ENCODE measurements at regions of chr19 and their contacts with region 1.

Region 1: GRCh38 chr19:5904352-5905113 is at the start of gene VMAC:
- DNase-seq: peak; percentile 100
- ATAC-seq: peak; percentile 85
- H3K4me3 ChIP-seq: peak within 1 kb of the TSS; percentile 78 to 100 (median 99)
- H3K27ac ChIP-seq: peak within 1 kb of the TSS; percentile 98
- H3K4me1 ChIP-seq: peaks cover 66% of the 10 kb centered on the region
- H3K27me3 ChIP-seq: peaks cover 0 to 4% of the 10 kb centered on the region in 2 experiments; a peak in 1 of 5 replicates
- CTCF ChIP-seq: no peak; the same call in 1 of the 2 replicates
- EP300 ChIP-seq: no peak
- POLR2A ChIP-seq: peak; percentile 62 to 80; a peak in 3 of 4 replicates
- RAD21 ChIP-seq: peak; percentile 71
- total RNA-seq, gene VMAC: 1.2 and 2.4 TPM in 2 replicates

Region 2: GRCh38 chr19:5803752-5804515 is 100.6 kb before region 1 on chr19:
- CTCF ChIA-PET with region 1: interaction called, 3 read pairs
- POLR2A ChIA-PET with region 1: interaction called, 27 read pairs
- in situ Hi-C with region 1: no loop called
- intact Hi-C with region 1: no loop called
- DNase-seq: peak; percentile 83
- ATAC-seq: peak; percentile 88
- H3K4me3 ChIP-seq: peak overlapping the region; percentile 36 to 68 (median 42)
- H3K27ac ChIP-seq: no peak overlapping the region
- H3K4me1 ChIP-seq: peaks cover 67% of the 10 kb centered on the region
- H3K27me3 ChIP-seq: no peaks in the 10 kb centered on the region; a peak in 1 of 5 replicates
- CTCF ChIP-seq: peak; percentile 99
- EP300 ChIP-seq: peak; percentile 7 to 25; a peak in 1 of 4 replicates
- POLR2A ChIP-seq: peak in 1 of 2 experiments; percentile 42; a peak in 1 of 4 replicates
- RAD21 ChIP-seq: peak; percentile 100

Region 3: GRCh38 chr19:5839065-5840017 is 65.2 kb before region 1 on chr19 and contains the start of gene FUT6:
- CTCF ChIA-PET with region 1: no interaction called
- POLR2A ChIA-PET with region 1: interaction called, 23 read pairs
- in situ Hi-C with region 1: no loop called
- intact Hi-C with region 1: no loop called
- DNase-seq: peak; percentile 59
- ATAC-seq: peak; percentile 70
- H3K4me3 ChIP-seq: peak within 1 kb of the TSS; percentile 69 to 84 (median 75)
- H3K27ac ChIP-seq: peak within 1 kb of the TSS; percentile 80
- H3K4me1 ChIP-seq: peaks cover 58% of the 10 kb centered on the region
- H3K27me3 ChIP-seq: no peaks in the 10 kb centered on the region; a peak in 1 of 5 replicates
- CTCF ChIP-seq: 0 out of 2 replicates have a peak, but pooled peaks have one; percentile 6
- EP300 ChIP-seq: 0 out of 4 replicates have a peak, but pooled peaks of 1 of the 2 experiments have one; percentile 55
- POLR2A ChIP-seq: peak in 1 of 2 experiments; percentile 63; a peak in 2 of 4 replicates
- RAD21 ChIP-seq: no peak
- total RNA-seq, gene FUT6: 5.0 and 8.2 TPM in 2 replicates

Region 4: GRCh38 chr19:5921516-5922160 is 17.1 kb after region 1 on chr19:
- CTCF ChIA-PET with region 1: no interaction called
- POLR2A ChIA-PET with region 1: no interaction called
- in situ Hi-C with region 1: no loop called
- intact Hi-C with region 1: no loop called
- DNase-seq: no peak
- ATAC-seq: no peak
- H3K4me3 ChIP-seq: no peak overlapping the region
- H3K27ac ChIP-seq: no peak overlapping the region
- H3K4me1 ChIP-seq: no peaks in the 10 kb centered on the region
- H3K27me3 ChIP-seq: no peaks in the 10 kb centered on the region; a peak in 1 of 5 replicates
- CTCF ChIP-seq: no peak
- EP300 ChIP-seq: no peak
- POLR2A ChIP-seq: no peak
- RAD21 ChIP-seq: no peak

Region 5: GRCh38 chr19:5953680-5954213 is 49.2 kb after region 1 on chr19:
- CTCF ChIA-PET with region 1: no interaction called
- POLR2A ChIA-PET with region 1: interaction called, 13 read pairs
- in situ Hi-C with region 1: no loop called
- intact Hi-C with region 1: loop called (anchors 2 kb)
- DNase-seq: no peak
- ATAC-seq: no peak
- H3K4me3 ChIP-seq: peak overlapping the region in 1 of 3 experiments; percentile 38; a peak in 1 of 6 replicates
- H3K27ac ChIP-seq: peak overlapping the region; percentile 58
- H3K4me1 ChIP-seq: peaks cover 66% of the 10 kb centered on the region
- H3K27me3 ChIP-seq: no peaks in the 10 kb centered on the region
- CTCF ChIP-seq: no peak
- EP300 ChIP-seq: no peak
- POLR2A ChIP-seq: no peak
- RAD21 ChIP-seq: no peak

Region 6: GRCh38 chr19:5961969-5962945 is 57.7 kb after region 1 on chr19:
- CTCF ChIA-PET with region 1: no interaction called
- POLR2A ChIA-PET with region 1: interaction called, 22 read pairs
- in situ Hi-C with region 1: no loop called
- intact Hi-C with region 1: loop called (anchors 2 kb)
- DNase-seq: peak; percentile 98
- ATAC-seq: peak; percentile 93
- H3K4me3 ChIP-seq: peak overlapping the region; percentile 19 to 68 (median 41); a peak in 5 of 6 replicates
- H3K27ac ChIP-seq: peak overlapping the region; percentile 95
- H3K4me1 ChIP-seq: peaks cover 99% of the 10 kb centered on the region
- H3K27me3 ChIP-seq: no peaks in the 10 kb centered on the region
- CTCF ChIP-seq: peak; percentile 53
- EP300 ChIP-seq: peak; percentile 20 to 82; a peak in 3 of 4 replicates
- POLR2A ChIP-seq: peak; percentile 45 to 85; a peak in 3 of 4 replicates
- RAD21 ChIP-seq: peak; percentile 36; the same call in 1 of the 2 replicates

Region 7: GRCh38 chr19:5977785-5978605 is 73.5 kb after region 1 on chr19 and contains the start of gene RANBP3:
- CTCF ChIA-PET with region 1: no interaction called
- POLR2A ChIA-PET with region 1: interaction called, 17 read pairs
- in situ Hi-C with region 1: no loop called
- intact Hi-C with region 1: no loop called
- DNase-seq: peak; percentile 97
- ATAC-seq: peak; percentile 85
- H3K4me3 ChIP-seq: peak within 1 kb of the TSS; percentile 87 to 98 (median 92)
- H3K27ac ChIP-seq: peak within 1 kb of the TSS; percentile 82
- H3K4me1 ChIP-seq: peaks cover 83% of the 10 kb centered on the region
- H3K27me3 ChIP-seq: no peaks in the 10 kb centered on the region; a peak in 1 of 5 replicates
- CTCF ChIP-seq: no peak
- EP300 ChIP-seq: no peak; a peak in 1 of 4 replicates
- POLR2A ChIP-seq: peak; percentile 51 to 70
- RAD21 ChIP-seq: peak; percentile 9; the same call in 1 of the 2 replicates
- total RNA-seq, gene RANBP3: 37.2 and 39.5 TPM in 2 replicates